SK-N-SH (cell line): ENCODE measurements at regions of chr11 and their contacts with region 1.

Region 1: DNA sequence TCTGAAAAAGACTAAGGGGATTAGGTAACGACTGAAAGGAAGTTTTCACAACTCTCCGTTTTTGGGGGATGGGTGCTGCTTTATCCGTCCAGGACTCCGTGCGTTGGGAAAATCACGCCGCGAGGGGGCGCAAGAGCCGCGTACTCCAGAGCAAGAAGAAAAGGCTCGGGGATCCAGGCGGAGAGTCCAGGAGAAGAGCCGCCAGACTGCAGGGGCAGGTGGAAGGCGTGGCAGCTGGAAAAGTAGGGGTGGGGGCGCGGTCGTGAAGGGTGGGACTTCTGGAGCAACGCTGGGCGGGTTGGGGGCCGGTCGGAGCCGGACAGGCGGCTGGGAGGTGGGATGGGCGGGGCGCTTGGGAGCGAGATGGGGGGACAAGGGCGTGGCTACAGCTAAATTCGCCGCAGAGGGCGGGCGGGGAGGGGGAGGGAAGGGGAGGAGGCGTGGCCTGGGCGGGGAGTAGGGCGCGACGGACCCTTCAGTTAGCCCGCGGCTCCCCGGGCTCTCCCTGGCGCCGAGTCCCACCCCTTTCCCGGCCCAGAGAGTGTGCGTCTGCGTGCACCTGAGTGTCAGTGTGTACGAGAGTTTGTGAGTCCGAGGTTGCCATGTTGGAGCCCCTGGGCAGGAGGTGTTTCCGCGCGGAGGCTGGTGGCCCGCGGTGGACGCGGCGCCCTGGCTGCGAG is 613 bp upstream of the ARHGEF17 start:
- DNase-seq: peak; percentile 97
- H3K4me3 ChIP-seq: peak overlapping the region; percentile 76 to 86
- H3K27ac ChIP-seq: peak overlapping the region; percentile 93 to 97
- H3K4me1 ChIP-seq: peaks cover 35 to 40% of the 10 kb centered on the region in 2 experiments
- H3K27me3 ChIP-seq: no peaks in the 10 kb centered on the region
- CTCF ChIP-seq: peak; percentile 90
- EP300 ChIP-seq: peak in 1 of 2 experiments; percentile 39; a peak in 1 of 4 replicates
- RAD21 ChIP-seq: peak; percentile 96

Region 2: DNA sequence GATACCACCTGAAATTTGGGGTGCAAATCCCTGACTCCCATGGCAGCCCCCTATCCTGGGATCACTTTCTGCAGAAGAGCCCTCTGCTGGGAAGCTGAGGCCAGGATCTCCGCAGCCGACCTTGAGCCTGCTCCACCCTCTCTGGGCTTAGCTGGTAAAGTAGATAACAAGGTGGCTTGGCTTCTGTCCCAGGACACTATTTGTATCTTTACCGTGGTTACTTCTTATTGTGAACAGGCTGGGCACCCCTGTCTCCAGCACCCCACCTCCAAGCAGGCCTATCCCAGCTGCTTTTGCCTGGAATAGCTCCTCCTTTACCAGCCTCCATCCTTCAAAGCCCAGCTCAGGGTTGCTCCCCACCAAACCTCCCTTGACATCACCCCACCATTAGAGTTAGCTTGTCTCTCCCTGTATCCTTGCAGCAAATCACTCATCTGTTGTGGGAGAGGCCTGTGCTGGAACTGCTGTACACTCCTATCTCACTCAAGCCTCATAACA is 124.6 kb before region 1 on chr11:
- CTCF ChIA-PET with region 1: no interaction called
- POLR2A ChIA-PET with region 1: no interaction called
- DNase-seq: no peak
- H3K4me3 ChIP-seq: no peak overlapping the region
- H3K27ac ChIP-seq: no peak overlapping the region
- H3K4me1 ChIP-seq: peaks cover 2 to 13% of the 10 kb centered on the region in 2 experiments; a peak in 3 of 4 replicates
- H3K27me3 ChIP-seq: no peaks in the 10 kb centered on the region; the same call in 1 of the 2 replicates
- CTCF ChIP-seq: no peak
- EP300 ChIP-seq: no peak
- RAD21 ChIP-seq: no peak

Region 3: GRCh38 chr11:73342633-73343032 is 35.2 kb after region 1 on chr11:
- CTCF ChIA-PET with region 1: interaction called, 395 read pairs
- POLR2A ChIA-PET with region 1: no interaction called
- DNase-seq: peak; percentile 86
- H3K4me3 ChIP-seq: peak overlapping the region in 1 of 2 experiments; percentile 6; a peak in 1 of 4 replicates
- H3K27ac ChIP-seq: no peak overlapping the region
- H3K4me1 ChIP-seq: peaks cover 0 to 44% of the 10 kb centered on the region in 2 experiments; a peak in 1 of 4 replicates
- H3K27me3 ChIP-seq: no peaks in the 10 kb centered on the region
- CTCF ChIP-seq: no peak
- EP300 ChIP-seq: no peak
- RAD21 ChIP-seq: no peak

Region 4: DNA sequence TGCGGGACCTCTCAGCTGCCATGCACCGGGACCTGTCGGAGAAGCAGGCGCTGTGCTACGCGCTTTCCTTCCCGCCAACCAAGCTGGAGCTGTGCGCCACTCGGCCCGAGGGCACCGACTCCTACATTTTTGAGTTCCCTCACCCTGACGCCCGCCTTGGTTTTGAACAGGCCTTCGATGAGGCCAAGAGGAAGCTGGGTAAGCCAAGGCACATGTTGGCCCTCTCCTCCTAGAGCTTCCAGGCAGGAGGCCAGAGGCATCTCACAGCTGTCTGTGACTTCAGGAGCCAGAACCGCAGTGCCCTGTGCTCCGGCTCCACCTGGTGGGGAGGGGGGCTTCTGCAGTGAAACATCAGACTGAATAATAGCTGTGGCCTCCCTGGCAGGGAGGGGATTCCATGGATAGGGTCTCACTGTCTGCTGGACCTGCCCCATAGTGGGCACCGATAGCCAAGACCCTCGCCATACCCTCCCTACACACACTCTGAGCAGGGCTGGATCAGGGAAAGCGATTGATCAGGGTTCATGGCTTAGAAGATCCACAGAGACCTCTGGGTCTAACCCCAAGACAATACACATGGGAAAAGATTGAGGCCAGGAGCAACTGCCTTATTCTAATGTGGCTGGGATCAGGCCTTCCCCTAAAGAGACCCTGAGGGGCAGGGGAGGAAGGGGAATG is 53.0 kb after region 1 on chr11:
- CTCF ChIA-PET with region 1: interaction called, 19 read pairs
- POLR2A ChIA-PET with region 1: interaction called, 3 read pairs
- DNase-seq: peak; percentile 78
- H3K4me3 ChIP-seq: no peak overlapping the region; a peak in 1 of 4 replicates
- H3K27ac ChIP-seq: no peak overlapping the region
- H3K4me1 ChIP-seq: peaks cover 0 to 8% of the 10 kb centered on the region in 2 experiments; a peak in 1 of 4 replicates
- H3K27me3 ChIP-seq: no peaks in the 10 kb centered on the region
- CTCF ChIP-seq: peak; percentile 54
- EP300 ChIP-seq: no peak
- RAD21 ChIP-seq: peak; percentile 57

Region 5: DNA sequence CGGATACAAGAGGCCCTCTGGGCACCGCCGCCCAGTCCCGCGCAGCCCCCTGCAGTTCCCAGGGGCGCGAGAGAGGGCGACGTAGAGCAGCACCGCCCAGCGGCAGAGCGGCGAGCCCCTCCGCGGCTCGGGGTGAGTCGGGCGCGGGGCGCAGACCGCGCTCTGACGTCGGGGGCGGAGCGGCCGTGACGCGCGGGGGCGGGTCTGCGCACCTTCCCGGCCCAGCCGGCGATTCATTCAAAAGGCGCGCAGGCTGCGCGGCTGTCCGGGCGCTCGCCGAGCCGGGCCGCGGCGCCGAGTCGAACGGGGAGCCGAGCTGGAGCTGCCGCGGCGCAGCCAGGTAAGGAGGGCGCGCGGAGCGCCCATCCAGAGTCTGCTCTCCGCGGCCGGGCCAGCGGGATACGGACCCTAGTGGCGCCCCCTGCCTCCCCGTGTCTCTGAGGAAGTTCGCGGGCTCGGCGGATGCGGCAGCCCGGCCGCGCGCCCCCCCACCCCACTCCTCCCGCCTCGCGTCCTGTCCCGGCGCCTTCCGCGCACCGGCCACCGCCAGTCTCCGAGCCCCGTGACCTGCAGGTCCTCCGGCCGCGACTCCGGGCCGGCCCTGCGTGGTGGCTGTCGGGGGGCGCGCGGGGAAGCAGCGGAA is 68.8 kb after region 1 on chr11 and contains the start of gene RELT:
- CTCF ChIA-PET with region 1: interaction called, 18 read pairs
- POLR2A ChIA-PET with region 1: no interaction called
- DNase-seq: peak; percentile 99
- H3K4me3 ChIP-seq: peak within 1 kb of the TSS; percentile 67 to 87
- H3K27ac ChIP-seq: peak within 1 kb of the TSS; percentile 64 to 71
- H3K4me1 ChIP-seq: peaks cover 3 to 19% of the 10 kb centered on the region in 2 experiments; a peak in 1 of 4 replicates
- H3K27me3 ChIP-seq: no peaks in the 10 kb centered on the region
- CTCF ChIP-seq: peak; percentile 73
- EP300 ChIP-seq: no peak
- RAD21 ChIP-seq: peak; percentile 53
- polyA plus RNA-seq, gene RELT: 4.3 and 5.5 TPM in 2 replicates

Region 6: GRCh38 chr11:73384872-73385689 is 77.6 kb after region 1 on chr11:
- CTCF ChIA-PET with region 1: interaction called, 12 read pairs
- POLR2A ChIA-PET with region 1: no interaction called
- DNase-seq: no peak
- H3K4me3 ChIP-seq: no peak overlapping the region
- H3K27ac ChIP-seq: no peak overlapping the region
- H3K4me1 ChIP-seq: peaks cover 15 to 24% of the 10 kb centered on the region in 2 experiments; a peak in 2 of 4 replicates
- H3K27me3 ChIP-seq: no peaks in the 10 kb centered on the region
- CTCF ChIP-seq: no peak
- EP300 ChIP-seq: no peak
- RAD21 ChIP-seq: no peak

Region 7: DNA sequence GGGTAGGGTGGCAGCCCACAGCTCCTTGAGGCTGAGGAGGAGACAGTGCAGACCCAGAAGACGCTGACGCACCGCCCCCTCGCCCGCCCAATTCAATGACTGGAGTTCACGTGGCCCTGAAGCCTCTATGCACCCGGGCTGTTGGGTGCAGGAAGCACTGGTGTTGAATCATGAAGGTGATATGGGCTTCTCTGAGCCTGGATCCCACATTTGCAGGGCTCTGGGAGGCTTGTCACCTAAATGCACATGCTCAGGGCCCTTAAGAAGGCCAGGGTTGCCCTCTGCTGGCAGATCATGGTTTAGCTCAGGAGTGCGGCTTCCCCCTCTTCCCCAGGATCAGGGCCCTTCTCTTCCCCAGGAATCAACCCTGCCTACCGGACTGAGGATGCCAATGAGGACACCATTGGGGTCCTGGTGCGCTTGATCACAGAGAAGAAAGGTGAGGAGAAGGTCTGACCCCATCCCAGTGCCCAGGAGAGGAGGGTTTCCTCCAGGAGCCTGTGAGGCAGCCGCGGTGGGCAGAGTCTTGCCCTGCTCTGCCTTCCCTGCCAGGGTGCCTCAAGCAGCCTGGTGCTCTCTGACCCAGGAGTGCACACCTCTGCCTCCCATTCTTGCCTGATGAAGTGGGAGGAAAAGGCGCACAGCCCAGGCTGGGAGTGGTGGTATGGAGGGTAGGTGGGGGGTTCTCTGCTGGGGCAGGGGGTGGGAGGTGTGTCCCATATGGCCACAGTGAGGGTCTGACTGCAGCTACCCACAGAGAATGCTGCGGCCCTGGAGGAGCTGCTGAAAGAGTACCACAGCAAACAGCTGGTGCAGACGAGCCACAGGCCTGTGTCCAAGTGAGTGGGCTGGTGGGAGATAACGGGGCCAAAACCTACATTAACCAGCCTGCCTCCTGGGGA is 86.3 kb after region 1 on chr11:
- CTCF ChIA-PET with region 1: interaction called, 16 read pairs
- POLR2A ChIA-PET with region 1: no interaction called
- DNase-seq: peak; percentile 94
- H3K4me3 ChIP-seq: no peak overlapping the region; a peak in 1 of 4 replicates
- H3K27ac ChIP-seq: no peak overlapping the region
- H3K4me1 ChIP-seq: no peaks in the 10 kb centered on the region; a peak in 1 of 4 replicates
- H3K27me3 ChIP-seq: no peaks in the 10 kb centered on the region
- CTCF ChIP-seq: peak; percentile 81
- EP300 ChIP-seq: no peak
- RAD21 ChIP-seq: peak; percentile 92

Region 8: GRCh38 chr11:73404048-73404447 is 96.6 kb after region 1 on chr11:
- CTCF ChIA-PET with region 1: interaction called, 13 read pairs
- POLR2A ChIA-PET with region 1: no interaction called
- DNase-seq: peak; percentile 84
- H3K4me3 ChIP-seq: no peak overlapping the region
- H3K27ac ChIP-seq: no peak overlapping the region
- H3K4me1 ChIP-seq: no peaks in the 10 kb centered on the region
- H3K27me3 ChIP-seq: no peaks in the 10 kb centered on the region
- CTCF ChIP-seq: peak; percentile 81
- EP300 ChIP-seq: no peak
- RAD21 ChIP-seq: peak; percentile 94